Aorta (tissue), 5 donors: ENCODE measurements at regions of chr13 and their contacts with region 1.

Region 1: DNA sequence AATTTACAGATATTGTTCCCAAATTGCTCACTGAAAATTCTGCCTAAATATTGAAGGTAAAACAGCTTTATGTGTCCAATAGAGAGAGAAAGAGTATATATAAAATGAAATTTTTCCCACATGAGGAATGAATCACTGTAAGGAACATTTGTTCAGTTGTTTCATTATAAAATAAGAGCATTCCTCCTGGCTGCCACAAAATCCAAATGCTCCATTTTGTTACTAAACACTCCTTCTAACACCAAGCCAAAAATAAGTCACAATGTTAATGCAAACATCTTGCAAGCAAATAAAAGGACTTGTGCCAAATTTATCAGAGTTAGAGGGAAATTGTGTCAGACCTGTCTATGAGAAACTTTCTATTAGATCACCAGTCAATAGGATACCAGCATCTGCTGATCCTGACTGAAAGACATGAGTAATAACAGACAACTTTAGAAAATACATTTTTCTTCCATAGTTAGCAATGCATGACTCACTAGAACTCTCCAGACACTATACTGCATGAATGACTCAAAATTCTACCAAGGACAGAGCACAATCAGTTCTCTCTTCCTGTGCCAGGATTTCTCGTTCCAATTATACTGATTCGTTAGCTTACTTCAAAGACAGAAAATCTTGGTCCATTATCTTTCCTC is 83.5 kb upstream of the FNDC3A start:
- DNase-seq: no peak
- ATAC-seq: no peak
- H3K4me3 ChIP-seq: no peak overlapping the region
- H3K27ac ChIP-seq: no peak overlapping the region
- H3K4me1 ChIP-seq: peaks cover 2 to 4% of the 10 kb centered on the region in 2 donors
- H3K27me3 ChIP-seq: no peaks in the 10 kb centered on the region

Region 2: GRCh38 chr13:48818495-48819031 is 73.6 kb before region 1 on chr13:
- intact Hi-C with region 1: loop called in 1 of 2 experiments (anchors 5 kb)
- DNase-seq: no peak
- ATAC-seq: peak; percentile 73
- H3K4me3 ChIP-seq: no peak overlapping the region
- H3K27ac ChIP-seq: peak overlapping the region; percentile 67 to 93
- H3K4me1 ChIP-seq: peaks cover 3 to 9% of the 10 kb centered on the region in 2 donors
- H3K27me3 ChIP-seq: no peaks in the 10 kb centered on the region